ENCODE measurements at regions of chr6 and their contacts with region 1.

Region 1: GRCh38 chr6:89080542-89081422 is at the start of gene PNRC1:
- DNase-seq: peak; percentile 98 to 99
- H3K4me3 ChIP-seq: peak within 1 kb of the TSS; percentile 100
- H3K4me3 Mint-ChIP-seq: peak within 1 kb of the TSS; percentile 93
- H3K27ac Mint-ChIP-seq: peak within 1 kb of the TSS; percentile 91
- H3K4me1 ChIP-seq: 0 out of 2 replicates have a peak, but pooled peaks cover 4% of the 10 kb centered on the region
- H3K4me1 Mint-ChIP-seq: peaks cover 4% of the 10 kb centered on the region
- H3K27me3 ChIP-seq: no peaks in the 10 kb centered on the region
- H3K27me3 Mint-ChIP-seq: no peaks in the 10 kb centered on the region
- CTCF ChIP-seq: peak in 1 of 2 experiments; percentile 21
- total RNA-seq, gene PNRC1: 42.1 and 45.1 TPM in 2 replicates

Region 2: DNA sequence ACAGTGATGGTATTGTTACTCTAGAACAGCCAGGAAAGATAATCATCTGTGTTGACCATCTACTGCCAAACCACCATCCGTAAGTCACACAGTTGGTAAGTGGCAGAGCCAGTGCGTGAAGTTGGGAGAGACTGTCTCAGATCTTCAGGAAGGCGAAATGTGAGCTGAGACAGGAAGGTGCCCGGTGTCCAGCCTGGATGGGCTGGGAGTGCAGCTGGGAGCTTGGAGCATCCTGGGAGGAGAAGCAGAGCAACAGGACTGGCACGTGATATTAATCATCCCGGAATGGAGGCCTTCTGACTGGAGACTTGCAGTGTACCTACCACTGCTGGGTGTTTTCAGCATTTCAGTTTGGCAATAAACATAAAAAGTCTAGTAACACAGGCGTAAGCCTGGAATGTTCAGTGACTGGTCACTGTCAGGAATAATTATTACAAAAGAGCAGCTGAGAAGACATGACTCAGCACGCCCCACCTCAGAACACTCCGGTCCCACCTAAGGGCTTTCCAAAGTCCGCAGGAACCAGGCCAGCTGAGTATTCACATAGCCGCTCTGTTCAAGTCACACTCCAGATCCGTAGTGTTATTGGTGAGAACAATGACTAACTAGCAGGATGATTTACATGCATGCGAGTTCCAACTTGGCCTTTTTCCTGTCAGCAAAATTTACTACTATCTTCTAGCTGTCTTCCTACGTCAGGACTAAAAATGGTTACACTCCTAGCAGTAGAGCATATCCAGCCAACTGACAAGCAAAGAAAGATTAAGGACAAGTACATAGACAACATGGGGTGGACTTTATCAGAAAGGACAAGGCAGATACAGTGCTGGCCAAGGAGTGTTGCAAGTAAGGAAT is 45.3 kb before region 1 on chr6:
- CTCF ChIA-PET with region 1: interaction called, 7 read pairs
- POLR2A ChIA-PET with region 1: interaction called, 15 read pairs
- intact Hi-C with region 1: loop called (anchors 1 kb)
- DNase-seq: peak; percentile 81 to 87
- H3K4me3 ChIP-seq: 0 out of 2 replicates have a peak overlapping the region, but pooled peaks have one; percentile 6
- H3K4me3 Mint-ChIP-seq: peak overlapping the region; percentile 65
- H3K27ac Mint-ChIP-seq: peak overlapping the region; percentile 87
- H3K4me1 ChIP-seq: peaks cover 25% of the 10 kb centered on the region
- H3K4me1 Mint-ChIP-seq: peaks cover 18% of the 10 kb centered on the region
- H3K27me3 ChIP-seq: no peaks in the 10 kb centered on the region
- H3K27me3 Mint-ChIP-seq: no peaks in the 10 kb centered on the region
- CTCF ChIP-seq: no peak

Region 3: GRCh38 chr6:89048286-89048923 is 32.4 kb before region 1 on chr6:
- CTCF ChIA-PET with region 1: no interaction called
- POLR2A ChIA-PET with region 1: interaction called, 15 read pairs
- intact Hi-C with region 1: no loop called
- DNase-seq: no peak
- H3K4me3 ChIP-seq: no peak overlapping the region
- H3K4me3 Mint-ChIP-seq: no peak overlapping the region
- H3K27ac Mint-ChIP-seq: peak overlapping the region; percentile 49
- H3K4me1 ChIP-seq: peaks cover 27% of the 10 kb centered on the region
- H3K4me1 Mint-ChIP-seq: peaks cover 19% of the 10 kb centered on the region
- H3K27me3 ChIP-seq: no peaks in the 10 kb centered on the region
- H3K27me3 Mint-ChIP-seq: no peaks in the 10 kb centered on the region
- CTCF ChIP-seq: no peak

Region 4: GRCh38 chr6:89140347-89141156 is 59.8 kb after region 1 on chr6:
- CTCF ChIA-PET with region 1: interaction called, 5 read pairs
- POLR2A ChIA-PET with region 1: interaction called, 5 read pairs
- intact Hi-C with region 1: loop called (anchors 2 kb)
- DNase-seq: peak; percentile 51
- H3K4me3 ChIP-seq: no peak overlapping the region
- H3K4me3 Mint-ChIP-seq: no peak overlapping the region
- H3K27ac Mint-ChIP-seq: peak overlapping the region; percentile 77
- H3K4me1 ChIP-seq: peaks cover 28% of the 10 kb centered on the region
- H3K4me1 Mint-ChIP-seq: peaks cover 33% of the 10 kb centered on the region
- H3K27me3 ChIP-seq: no peaks in the 10 kb centered on the region
- H3K27me3 Mint-ChIP-seq: no peaks in the 10 kb centered on the region
- CTCF ChIP-seq: no peak